ENCODE measurements at regions of chr6 and their contacts with region 1.

Region 1: DNA sequence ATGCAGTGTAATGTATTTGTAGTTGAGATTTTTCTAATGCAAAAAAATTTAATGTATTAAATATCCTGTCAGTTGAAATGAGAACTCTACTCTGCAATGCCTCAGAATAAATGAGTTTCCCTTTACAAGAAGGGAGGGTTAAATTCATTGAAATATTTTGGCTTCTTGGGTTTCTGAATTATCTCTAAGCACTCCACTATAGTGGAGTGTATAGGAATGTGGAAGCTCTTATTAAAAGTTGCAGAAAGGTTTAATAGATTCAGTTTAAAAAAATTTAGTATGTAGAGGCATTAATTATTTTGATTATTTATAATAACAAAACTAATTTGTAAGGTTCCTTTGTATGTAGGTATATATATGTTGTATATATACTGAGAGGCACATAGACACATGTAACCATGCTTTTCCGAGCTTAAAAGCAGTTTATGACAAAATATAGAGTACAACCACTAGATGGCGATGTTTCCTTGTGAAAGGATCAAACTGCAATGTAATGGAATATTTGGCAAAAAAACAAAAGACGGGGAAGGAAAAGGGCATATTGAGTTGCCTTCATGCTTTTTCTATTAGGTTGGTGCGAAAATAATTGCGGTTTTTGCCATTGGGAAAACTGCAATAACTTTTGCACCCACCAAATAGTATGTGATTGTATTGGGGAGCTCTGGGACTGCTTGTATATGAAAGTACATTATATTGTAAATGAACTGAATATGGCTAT is 144.2 kb downstream of the MYO6 start:
- DNase-seq: peak; percentile 5 to 57
- ATAC-seq: peak; percentile 66 to 78; a peak in 4 of 6 replicates
- H3K4me3 ChIP-seq: no peak overlapping the region
- H3K27ac ChIP-seq: no peak overlapping the region
- H3K4me1 ChIP-seq: no peaks in the 10 kb centered on the region
- CTCF ChIP-seq: peak; percentile 68
- EP300 ChIP-seq: no peak
- POLR2A ChIP-seq: no peak
- RAD21 ChIP-seq: peak; percentile 66 to 67

Region 2: DNA sequence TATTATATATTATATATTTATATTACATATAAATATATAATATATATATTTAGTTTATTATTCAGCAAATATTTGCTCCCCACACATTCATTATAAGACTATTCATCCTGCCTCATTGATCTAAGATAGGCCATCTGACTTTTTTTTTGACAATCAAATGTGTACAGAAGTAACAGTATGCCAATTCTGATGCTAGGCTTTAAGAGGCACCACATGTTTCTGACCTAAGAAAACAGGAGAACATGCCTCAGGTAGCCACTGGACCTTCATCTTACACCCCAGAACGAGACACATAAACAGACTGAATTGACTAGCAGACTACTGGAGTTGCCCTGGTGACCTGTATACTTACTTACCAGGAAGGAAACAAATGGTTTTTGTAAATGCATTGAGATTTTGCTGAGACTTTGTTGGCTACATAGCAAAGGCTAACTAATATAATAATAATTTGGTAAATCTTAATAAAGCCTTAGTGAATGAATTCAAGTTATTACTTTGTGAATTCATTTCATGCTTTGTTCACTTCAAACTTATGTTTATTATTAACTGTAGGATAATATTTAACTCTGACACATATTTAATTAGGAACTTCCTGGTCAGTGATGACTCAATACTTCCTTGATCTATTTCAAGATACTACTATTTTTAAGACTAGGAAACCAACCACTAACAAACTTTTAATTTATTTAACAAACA is 157.6 kb before region 1 on chr6:
- CTCF ChIA-PET with region 1: no interaction called
- POLR2A ChIA-PET with region 1: no interaction called
- DNase-seq: peak; percentile 24 to 72
- ATAC-seq: peak; percentile 56 to 81; a peak in 3 of 6 replicates
- H3K4me3 ChIP-seq: no peak overlapping the region
- H3K27ac ChIP-seq: peak overlapping the region; percentile 66 to 76; a peak in 5 of 6 replicates
- H3K4me1 ChIP-seq: peaks cover 12% of the 10 kb centered on the region
- CTCF ChIP-seq: no peak
- EP300 ChIP-seq: no peak
- POLR2A ChIP-seq: no peak
- RAD21 ChIP-seq: no peak

Region 3: DNA sequence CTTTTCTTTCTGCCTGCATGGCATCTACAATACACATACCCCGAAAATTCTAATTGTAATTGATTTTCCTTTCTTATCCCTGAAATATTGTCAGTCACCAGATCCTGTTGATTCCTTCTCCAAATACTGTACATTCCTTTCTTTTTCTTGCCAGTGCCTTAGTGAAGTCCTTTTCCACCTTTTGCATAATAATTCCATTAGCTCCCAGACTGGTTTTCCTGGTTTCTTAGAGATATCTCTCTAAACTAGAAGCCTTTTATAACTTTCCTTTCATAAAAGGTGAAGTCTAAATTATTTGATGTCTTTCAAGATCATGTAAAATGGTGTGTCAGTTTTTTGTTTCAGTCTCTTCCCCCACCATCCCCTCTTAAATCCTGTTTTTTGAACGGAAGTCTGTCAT is 11.1 kb before region 1 on chr6:
- CTCF ChIA-PET with region 1: interaction called, 29 read pairs
- POLR2A ChIA-PET with region 1: no interaction called
- DNase-seq: no peak
- ATAC-seq: no peak
- H3K4me3 ChIP-seq: no peak overlapping the region
- H3K27ac ChIP-seq: no peak overlapping the region
- H3K4me1 ChIP-seq: no peaks in the 10 kb centered on the region
- CTCF ChIP-seq: no peak
- EP300 ChIP-seq: no peak
- POLR2A ChIP-seq: no peak
- RAD21 ChIP-seq: no peak

Region 4: DNA sequence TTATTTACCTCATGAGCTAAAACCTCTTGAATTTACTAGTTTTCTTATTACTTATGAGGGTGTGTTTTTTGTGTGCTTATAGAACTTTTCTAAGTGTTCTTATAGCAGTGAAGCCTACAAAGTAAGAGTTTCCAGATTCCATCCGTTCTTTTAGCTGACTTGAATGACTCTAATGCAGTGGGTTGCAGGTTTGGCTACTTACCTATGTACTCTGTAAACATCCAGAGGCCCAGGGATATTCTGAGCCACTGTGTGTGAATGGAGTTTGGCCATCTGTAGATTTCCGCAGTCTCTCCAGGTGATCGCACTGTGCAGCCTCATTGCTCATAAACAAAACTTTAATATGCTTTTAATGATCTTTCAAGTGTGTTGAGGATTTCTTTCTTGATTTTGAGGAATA is 13.7 kb after region 1 on chr6:
- CTCF ChIA-PET with region 1: interaction called, 13 read pairs
- POLR2A ChIA-PET with region 1: no interaction called
- DNase-seq: no peak
- ATAC-seq: no peak
- H3K4me3 ChIP-seq: no peak overlapping the region
- H3K27ac ChIP-seq: no peak overlapping the region
- H3K4me1 ChIP-seq: no peaks in the 10 kb centered on the region
- CTCF ChIP-seq: no peak
- EP300 ChIP-seq: no peak
- POLR2A ChIP-seq: no peak
- RAD21 ChIP-seq: no peak